Right ventricle myocardium inferior (tissue), 1 donor: ENCODE measurements at regions of chr18 and their contacts with region 1.

Region 1: DNA sequence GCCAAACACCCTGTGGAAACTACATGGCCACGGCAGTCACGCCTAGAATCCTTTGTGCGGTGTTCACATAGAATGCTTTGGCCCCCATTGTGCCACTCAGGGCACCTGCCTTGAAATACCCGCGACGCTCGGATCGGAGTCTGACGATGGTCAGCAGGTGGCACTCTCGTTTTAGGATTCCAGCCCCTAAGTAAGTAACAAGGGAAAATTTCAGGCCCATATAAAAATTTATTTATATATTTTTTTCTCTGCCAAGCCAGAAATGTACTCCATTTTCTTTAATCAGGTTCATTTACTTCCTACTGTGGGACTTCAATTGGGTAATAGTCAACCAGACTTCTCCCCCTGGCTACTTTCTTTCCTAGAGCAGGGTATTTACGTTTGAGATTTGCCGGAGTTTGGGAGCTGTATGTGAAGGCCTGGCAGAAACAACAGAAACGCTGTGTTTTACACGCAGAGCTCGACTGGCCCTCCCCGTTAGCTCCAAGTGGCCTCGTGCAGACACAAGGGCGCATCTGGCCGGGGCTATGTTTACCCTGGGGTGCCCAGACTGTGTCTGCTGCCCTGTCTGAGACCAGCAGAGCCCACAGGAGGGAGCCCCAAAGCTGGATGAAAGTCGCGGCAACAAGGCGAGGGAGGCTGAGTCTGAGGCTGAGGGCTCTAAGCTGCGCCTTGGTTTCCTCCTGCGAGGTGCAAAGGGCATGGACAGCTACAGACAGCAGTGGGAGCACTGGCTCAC is 41.6 kb downstream of the LRRC30 start:
- DNase-seq: peak; percentile 75
- ATAC-seq: peak; percentile 80

Region 2: GRCh38 chr18:6960656-6961055 is 311.8 kb before region 1 on chr18:
- intact Hi-C with region 1: no loop called
- DNase-seq: no peak
- ATAC-seq: no peak

Region 3: GRCh38 chr18:7158216-7158615 is 114.3 kb before region 1 on chr18:
- intact Hi-C with region 1: no loop called
- DNase-seq: no peak
- ATAC-seq: no peak

Region 4: GRCh38 chr18:7317804-7318231 is 45.3 kb after region 1 on chr18:
- intact Hi-C with region 1: no loop called
- DNase-seq: no peak
- ATAC-seq: no peak

Region 5: DNA sequence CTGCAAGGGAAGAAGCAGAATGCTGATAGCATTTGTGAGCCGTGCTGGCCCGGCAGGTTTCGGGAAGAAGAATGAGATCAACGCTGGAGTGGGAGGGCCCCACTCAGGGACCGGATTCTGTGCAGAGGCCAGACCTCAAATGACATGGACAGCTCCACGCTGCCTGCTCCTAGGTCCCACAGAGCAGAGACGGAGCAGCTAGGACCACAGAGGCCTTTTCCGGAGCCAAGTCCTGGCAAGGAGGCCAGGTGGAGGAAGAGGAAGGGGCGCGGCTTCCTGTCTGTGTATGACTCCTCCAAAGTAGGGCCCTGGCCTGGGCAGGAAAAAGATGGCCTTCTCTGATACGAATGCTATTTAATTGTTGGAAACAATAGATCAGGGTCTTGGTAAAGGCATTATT is 98.3 kb after region 1 on chr18:
- intact Hi-C with region 1: loop called (anchors 1 kb)
- DNase-seq: peak; percentile 77
- ATAC-seq: peak; percentile 81

Region 6: DNA sequence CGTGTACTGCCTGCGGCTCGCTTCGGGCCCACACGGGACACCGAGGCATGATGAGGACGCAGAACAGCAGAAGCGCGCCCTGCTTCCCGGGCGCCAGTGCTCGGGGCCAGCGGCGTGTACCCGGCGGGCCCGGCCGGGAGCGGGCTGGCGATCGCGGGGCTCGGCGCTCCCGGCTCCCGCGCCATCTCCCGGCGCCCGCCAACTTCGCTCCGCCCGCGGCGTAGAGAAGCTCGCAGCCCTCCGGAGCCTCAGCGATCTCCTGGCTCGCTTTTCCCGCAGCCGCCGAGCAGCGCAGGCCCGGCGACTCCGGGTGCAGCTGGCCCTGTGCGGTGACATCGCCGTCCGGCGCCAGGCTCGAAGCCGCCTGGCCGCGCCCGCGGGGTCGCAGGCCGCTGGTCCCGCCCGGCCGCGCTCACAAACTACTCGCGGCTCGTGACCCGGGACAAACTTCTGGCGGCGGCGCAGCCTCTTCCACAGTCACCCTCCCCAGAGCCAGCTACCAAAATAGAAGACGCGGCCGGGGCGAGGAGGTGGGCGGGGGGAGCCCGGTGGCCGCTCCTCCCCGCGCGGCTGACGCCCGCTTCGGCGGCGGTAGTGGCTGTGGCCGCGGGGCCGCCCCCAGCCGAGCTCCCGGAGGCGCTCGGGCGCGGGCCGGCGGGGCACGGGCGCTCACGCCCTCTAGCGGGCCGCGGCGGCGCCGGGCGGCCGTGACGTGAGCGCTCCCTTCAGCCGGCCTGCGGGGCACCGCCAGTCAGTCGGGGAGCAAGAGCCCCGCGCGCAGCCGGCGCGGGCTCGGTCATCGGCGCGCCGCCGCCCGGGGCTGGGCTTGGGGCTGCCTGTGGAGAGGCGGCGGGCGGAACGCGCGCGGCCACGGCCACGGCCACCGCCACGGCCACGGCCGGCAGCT is 294.3 kb after region 1 on chr18 and contains the start of gene PTPRM:
- intact Hi-C with region 1: loop called (anchors 1 kb)
- DNase-seq: peak; percentile 94
- ATAC-seq: peak; percentile 95
- total RNA-seq, gene PTPRM: 102 TPM

Region 7: DNA sequence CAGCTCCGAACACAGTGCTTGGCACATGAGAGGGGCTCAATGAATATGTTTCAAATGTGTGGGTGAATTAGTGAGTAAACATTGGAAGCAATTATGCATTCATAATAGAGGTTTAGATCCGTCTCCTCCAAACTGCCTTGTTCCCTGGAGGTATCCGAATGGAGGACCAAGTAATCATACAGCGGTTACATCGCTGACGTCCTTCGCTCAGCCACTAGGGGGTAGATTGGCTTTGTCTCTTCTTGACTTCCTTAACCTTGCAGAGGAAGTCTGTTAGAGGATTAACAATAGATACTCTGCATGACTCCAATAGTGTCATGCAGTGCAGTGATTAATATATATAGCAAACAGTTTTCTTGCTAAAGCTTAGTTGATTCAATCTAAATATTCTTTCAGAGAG is 811.7 kb after region 1 on chr18:
- intact Hi-C with region 1: loop called (anchors 10 kb)
- DNase-seq: no peak
- ATAC-seq: peak; percentile 50

Region 8: GRCh38 chr18:8389391-8390340 is 1117.2 kb after region 1 on chr18:
- intact Hi-C with region 1: loop called (anchors 5 kb)
- DNase-seq: peak; percentile 74
- ATAC-seq: peak; percentile 81